MCF 10A (cell line): ENCODE measurements at regions of chr1 and their contacts with region 1.

Region 1: DNA sequence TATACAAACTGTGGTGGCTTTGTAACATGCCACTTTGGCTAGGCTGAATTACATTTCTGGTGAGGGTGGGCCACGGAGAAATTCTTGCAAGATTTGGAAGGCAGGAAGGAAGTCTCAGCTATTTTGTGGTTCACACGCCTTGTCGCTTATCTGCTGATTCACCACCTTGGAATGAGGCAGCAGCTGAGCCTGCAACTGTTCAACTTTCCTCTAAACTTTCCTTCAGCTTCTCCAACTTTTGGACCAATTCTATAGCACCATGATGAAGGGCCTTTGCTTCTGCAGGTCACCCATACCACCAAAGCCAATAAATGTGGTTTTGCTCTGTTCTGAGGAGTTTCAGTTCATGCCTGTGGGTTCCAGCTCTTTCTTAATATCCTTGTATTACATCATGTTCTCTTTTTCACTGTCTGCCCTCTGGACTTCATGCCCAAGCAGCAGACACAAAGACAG is 337.6 kb upstream of the SNX7 start:
- DNase-seq: peak; percentile 90
- H3K4me3 Mint-ChIP-seq: peak overlapping the region; percentile 48
- H3K27ac Mint-ChIP-seq: peak overlapping the region; percentile 83
- H3K4me1 Mint-ChIP-seq: peaks cover 42% of the 10 kb centered on the region
- H3K27me3 Mint-ChIP-seq: no peaks in the 10 kb centered on the region
- CTCF ChIP-seq: no peak

Region 2: DNA sequence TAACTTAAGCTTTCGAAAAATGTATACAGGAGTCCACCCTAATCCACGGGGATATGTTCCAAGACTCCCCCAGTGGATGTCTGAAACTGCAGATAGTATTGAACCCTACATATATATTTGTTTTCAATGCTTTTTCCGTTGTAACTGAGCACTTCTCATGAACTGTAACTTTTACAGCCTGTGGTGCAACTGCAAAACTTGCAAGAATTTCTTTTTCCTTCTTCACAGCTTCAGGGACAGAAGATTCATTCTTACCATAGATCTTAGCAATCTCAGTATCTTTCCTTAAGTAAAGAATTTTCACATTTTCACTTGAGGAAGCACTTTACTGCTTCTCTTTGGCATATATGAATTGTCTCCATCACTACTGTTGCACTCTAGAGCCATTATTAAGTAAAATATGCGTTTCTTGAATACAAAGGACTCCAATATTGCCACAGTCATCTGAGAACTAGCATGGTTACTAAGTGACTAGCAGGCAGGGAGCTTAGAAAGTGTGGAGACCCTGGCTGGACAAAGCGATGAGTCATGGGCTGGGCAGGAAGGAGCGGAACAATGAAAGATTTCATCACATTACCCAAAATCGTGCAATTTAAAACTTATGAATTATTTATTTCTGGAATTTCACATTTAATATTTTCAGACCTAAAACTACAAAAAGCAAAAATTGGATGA is 417.2 kb before region 1 on chr1:
- CTCF ChIA-PET with region 1: no interaction called
- POLR2A ChIA-PET with region 1: no interaction called
- intact Hi-C with region 1: loop called (anchors 10 kb)
- DNase-seq: peak; percentile 93
- H3K4me3 Mint-ChIP-seq: peak overlapping the region; percentile 38
- H3K27ac Mint-ChIP-seq: no peak overlapping the region
- H3K4me1 Mint-ChIP-seq: peaks cover 12% of the 10 kb centered on the region
- H3K27me3 Mint-ChIP-seq: no peaks in the 10 kb centered on the region
- CTCF ChIP-seq: no peak

Region 3: GRCh38 chr1:98196012-98196411 is 127.9 kb before region 1 on chr1:
- CTCF ChIA-PET with region 1: no interaction called
- POLR2A ChIA-PET with region 1: no interaction called
- intact Hi-C with region 1: no loop called
- DNase-seq: no peak
- H3K4me3 Mint-ChIP-seq: no peak overlapping the region
- H3K27ac Mint-ChIP-seq: no peak overlapping the region
- H3K4me1 Mint-ChIP-seq: no peaks in the 10 kb centered on the region
- H3K27me3 Mint-ChIP-seq: no peaks in the 10 kb centered on the region
- CTCF ChIP-seq: no peak

Region 4: GRCh38 chr1:98388441-98388840 is 64.5 kb after region 1 on chr1:
- CTCF ChIA-PET with region 1: no interaction called
- POLR2A ChIA-PET with region 1: no interaction called
- intact Hi-C with region 1: loop called (anchors 5 kb)
- DNase-seq: peak; percentile 43
- H3K4me3 Mint-ChIP-seq: no peak overlapping the region
- H3K27ac Mint-ChIP-seq: peak overlapping the region; percentile 85
- H3K4me1 Mint-ChIP-seq: peaks cover 26% of the 10 kb centered on the region
- H3K27me3 Mint-ChIP-seq: no peaks in the 10 kb centered on the region
- CTCF ChIP-seq: no peak

Region 5: GRCh38 chr1:98478121-98478520 is 154.2 kb after region 1 on chr1:
- CTCF ChIA-PET with region 1: no interaction called
- POLR2A ChIA-PET with region 1: no interaction called
- intact Hi-C with region 1: no loop called
- DNase-seq: no peak
- H3K4me3 Mint-ChIP-seq: no peak overlapping the region
- H3K27ac Mint-ChIP-seq: no peak overlapping the region
- H3K4me1 Mint-ChIP-seq: no peaks in the 10 kb centered on the region
- H3K27me3 Mint-ChIP-seq: no peaks in the 10 kb centered on the region
- CTCF ChIP-seq: no peak